Right cardiac atrium (tissue), 5 donors: ENCODE measurements at regions of chr14 and their contacts with region 1.

Region 1: DNA sequence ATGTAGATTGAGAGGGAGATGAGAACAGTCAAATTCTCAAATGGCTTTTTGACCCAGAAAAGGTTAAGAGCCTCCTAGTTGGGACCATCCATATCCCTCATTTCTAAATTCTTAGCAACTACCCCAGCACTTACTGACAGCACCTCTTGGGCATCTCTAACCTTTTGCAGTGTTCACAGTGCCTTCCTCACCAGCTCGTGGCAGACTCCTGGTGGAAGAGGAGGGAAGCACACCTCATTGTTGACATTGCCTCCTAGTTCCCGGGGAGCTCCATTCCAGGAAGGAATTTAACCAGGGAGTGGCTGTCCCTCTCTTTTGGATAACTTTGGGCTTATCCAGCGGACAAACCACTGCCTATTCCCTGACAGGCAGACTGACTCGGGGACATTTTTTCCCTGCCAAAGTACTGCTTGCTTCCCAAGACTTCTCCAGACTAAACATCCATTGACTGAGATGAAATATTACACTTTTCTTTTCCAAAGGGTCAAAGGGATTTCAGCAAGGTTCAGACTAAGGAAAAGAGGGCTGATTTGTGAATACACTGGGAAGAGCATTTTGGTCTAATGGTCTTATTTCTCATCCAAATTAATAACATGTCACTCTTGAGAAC is 9.0 kb upstream of the OR6J1 start:
- DNase-seq: peak in 2 of 3 donors; percentile 41 to 61
- ATAC-seq: peak; percentile 63 to 84
- H3K4me3 ChIP-seq: no peak overlapping the region
- H3K27ac ChIP-seq: no peak overlapping the region
- H3K4me1 ChIP-seq: no peaks in the 10 kb centered on the region
- H3K27me3 ChIP-seq: no peaks in the 10 kb centered on the region

Region 2: DNA sequence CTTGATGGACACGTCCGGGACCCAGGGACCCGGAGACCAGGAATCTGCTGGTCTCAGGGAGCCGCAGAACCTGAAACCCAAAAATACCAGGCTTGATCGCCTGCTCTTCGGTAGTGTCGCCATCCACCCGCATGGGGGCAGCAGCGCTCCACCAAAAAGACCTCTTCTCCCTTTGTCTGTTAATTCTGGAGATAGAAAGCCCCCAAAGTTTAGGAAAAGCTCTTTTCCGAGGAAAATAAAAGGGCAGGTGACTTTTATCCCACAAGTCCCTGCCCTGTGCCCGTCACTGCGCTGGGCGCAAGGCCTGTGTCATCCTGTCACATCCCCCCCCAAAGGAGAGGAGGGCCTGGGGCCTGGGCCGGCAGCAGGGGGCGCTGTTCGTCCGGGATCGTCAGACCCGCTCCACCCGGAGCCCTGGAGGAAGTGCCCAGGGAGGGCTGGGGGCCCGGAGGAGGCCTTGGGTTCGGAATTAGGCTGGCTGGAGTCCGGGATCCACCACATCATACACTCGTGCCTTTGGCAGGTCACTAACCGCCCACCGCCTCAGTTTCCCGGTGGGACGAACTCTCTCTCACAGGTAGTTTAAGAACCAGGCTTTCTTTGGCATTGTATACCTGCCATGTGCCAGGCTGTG is 96.0 kb before region 1 on chr14:
- intact Hi-C with region 1: loop called in 1 of 4 experiments (anchors 10 kb)
- DNase-seq: peak; percentile 89 to 95 (median 92)
- ATAC-seq: peak; percentile 85 to 87
- H3K4me3 ChIP-seq: peak overlapping the region; percentile 26
- H3K27ac ChIP-seq: no peak overlapping the region
- H3K4me1 ChIP-seq: peaks cover 2% of the 10 kb centered on the region
- H3K27me3 ChIP-seq: no peaks in the 10 kb centered on the region

Region 3: DNA sequence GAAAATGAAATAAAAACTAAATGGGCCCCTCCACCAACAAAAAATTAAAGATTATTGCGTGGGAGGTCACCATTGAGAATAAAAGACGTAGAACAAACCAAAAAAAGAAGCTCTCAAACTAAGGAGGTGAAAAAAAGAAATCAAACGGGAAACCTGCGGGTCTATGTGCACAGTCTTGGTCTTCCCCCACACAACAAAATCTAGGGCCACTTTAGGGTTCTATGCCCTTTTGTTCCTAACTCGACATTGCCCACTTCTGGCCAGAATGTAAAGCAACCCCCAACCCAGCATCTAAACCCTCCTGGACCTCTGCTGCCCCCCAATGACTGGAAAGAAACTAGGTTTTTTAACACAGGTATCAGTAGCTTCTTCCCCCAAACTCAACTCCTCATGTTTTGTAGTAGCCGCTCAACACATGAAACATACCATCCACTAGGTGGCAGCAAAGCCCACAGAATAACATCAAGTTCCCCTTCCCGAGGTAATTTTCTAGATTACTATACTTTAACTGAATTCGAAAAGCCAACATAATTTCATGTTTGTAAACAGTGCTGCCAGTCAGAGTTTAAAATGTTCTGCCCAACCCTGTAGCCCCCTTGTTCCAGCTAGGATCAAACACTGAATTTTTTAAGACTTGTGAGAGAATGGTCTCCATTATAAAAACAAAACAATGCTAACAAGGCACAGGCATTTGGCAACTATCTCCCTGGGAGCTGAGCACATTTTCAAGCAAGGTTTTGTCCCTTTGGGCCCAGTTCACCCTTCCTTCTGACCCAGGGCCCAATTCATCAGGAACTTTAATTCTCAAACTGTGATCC is 82.8 kb before region 1 on chr14:
- intact Hi-C with region 1: loop called (anchors 2 to 10 kb)
- DNase-seq: peak in 2 of 3 donors; percentile 50 to 80
- ATAC-seq: peak; percentile 65 to 72
- H3K4me3 ChIP-seq: no peak overlapping the region
- H3K27ac ChIP-seq: peak overlapping the region; percentile 3
- H3K4me1 ChIP-seq: peaks cover 2% of the 10 kb centered on the region
- H3K27me3 ChIP-seq: no peaks in the 10 kb centered on the region

Region 4: DNA sequence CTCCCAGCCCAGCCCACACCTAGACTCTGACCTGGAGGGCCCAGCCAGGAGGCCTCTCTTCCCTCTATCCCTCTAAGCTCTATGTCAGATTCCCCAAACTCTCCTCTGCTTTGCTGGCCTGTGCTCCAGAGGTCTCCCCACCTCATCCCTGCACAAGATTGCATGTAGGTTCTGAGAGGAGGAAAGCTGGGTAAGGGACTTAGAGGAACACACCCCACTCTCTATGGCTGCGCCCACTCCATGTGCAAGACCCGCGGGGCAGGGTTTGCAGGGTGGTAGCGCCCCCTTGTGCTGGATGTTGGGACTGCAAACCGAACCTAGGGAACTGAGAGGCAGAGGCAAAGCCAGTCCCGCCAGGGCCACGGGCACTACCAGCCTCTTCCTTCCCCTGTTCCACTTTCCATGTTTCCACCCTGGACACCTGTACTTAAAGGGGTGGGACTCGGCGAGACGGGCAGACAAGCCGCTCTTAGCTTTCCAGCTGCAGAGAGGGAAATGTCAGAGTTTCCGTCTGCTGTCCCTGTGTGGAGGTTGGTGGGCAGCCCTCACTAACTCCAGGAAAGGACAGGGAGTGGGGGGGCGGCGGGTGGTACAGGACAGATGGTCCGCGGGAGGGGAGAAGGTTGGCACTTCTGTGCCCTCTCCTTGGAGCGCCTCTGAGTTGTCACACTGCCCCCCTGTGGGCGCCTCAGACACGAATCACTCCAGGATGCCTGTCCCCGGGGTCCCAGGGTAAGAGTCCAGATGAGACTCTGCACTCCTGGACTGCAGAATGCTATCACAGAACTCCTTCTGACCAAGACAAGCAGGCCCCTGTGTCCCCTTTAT is 200.0 kb after region 1 on chr14:
- intact Hi-C with region 1: loop called in 1 of 4 experiments (anchors 10 kb)
- DNase-seq: peak; percentile 85 to 96 (median 96)
- ATAC-seq: peak; percentile 46 to 58
- H3K4me3 ChIP-seq: peak overlapping the region; percentile 46
- H3K27ac ChIP-seq: no peak overlapping the region
- H3K4me1 ChIP-seq: peaks cover 21% of the 10 kb centered on the region
- H3K27me3 ChIP-seq: no peaks in the 10 kb centered on the region